ENCODE measurements at regions of chr5 and their contacts with region 1.

Region 1: GRCh38 chr5:172770675-172771438 is at the start of gene DUSP1:
- DNase-seq: no peak
- H3K4me3 ChIP-seq: peak within 1 kb of the TSS; percentile 91 to 99
- H3K27ac ChIP-seq: peak within 1 kb of the TSS; percentile 98
- H3K4me1 ChIP-seq: peaks cover 72% of the 10 kb centered on the region
- H3K27me3 ChIP-seq: no peaks in the 10 kb centered on the region
- CTCF ChIP-seq: peak in 1 of 3 experiments; percentile 35
- POLR2A ChIP-seq: peak in 1 of 2 donors; percentile 100
- total RNA-seq, gene DUSP1: 2,876 TPM

Region 2: GRCh38 chr5:172795318-172795977 is 24.6 kb after region 1 on chr5:
- intact Hi-C with region 1: loop called (anchors 2 kb)
- DNase-seq: peak in 1 of 2 donors; percentile 100
- H3K4me3 ChIP-seq: no peak overlapping the region
- H3K27ac ChIP-seq: peak overlapping the region; percentile 92
- H3K4me1 ChIP-seq: peaks cover 65% of the 10 kb centered on the region
- H3K27me3 ChIP-seq: no peaks in the 10 kb centered on the region
- CTCF ChIP-seq: peak in 1 of 3 experiments; percentile 26
- POLR2A ChIP-seq: no peak

Region 3: GRCh38 chr5:172953776-172954675 is 183.2 kb after region 1 on chr5:
- intact Hi-C with region 1: no loop called
- DNase-seq: no peak
- H3K4me3 ChIP-seq: no peak overlapping the region
- H3K27ac ChIP-seq: no peak overlapping the region
- H3K4me1 ChIP-seq: peaks cover 11% of the 10 kb centered on the region
- H3K27me3 ChIP-seq: no peaks in the 10 kb centered on the region
- CTCF ChIP-seq: no peak
- POLR2A ChIP-seq: no peak

Region 4: DNA sequence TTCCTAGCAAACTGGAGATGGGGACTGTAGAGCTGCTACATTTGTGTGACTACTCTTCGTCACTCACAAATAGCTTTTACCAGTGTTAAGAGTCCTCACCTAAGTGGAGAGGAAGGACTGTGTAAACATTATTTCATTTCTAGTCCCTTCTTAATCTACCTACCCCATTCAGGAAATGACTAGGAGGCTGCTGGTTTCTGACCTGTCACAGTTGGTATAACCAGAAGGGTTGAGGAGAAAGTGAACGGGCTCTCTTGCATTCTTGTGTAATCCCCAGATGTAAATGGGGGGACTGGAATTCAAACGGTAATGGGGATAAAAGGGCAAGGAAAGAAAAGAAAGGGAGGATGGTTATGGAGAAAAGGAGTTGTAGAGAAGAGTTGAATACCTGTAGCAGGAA is 338.1 kb after region 1 on chr5:
- intact Hi-C with region 1: no loop called
- DNase-seq: no peak
- H3K4me3 ChIP-seq: no peak overlapping the region
- H3K27ac ChIP-seq: no peak overlapping the region
- H3K4me1 ChIP-seq: peaks cover 2% of the 10 kb centered on the region
- H3K27me3 ChIP-seq: no peaks in the 10 kb centered on the region
- CTCF ChIP-seq: no peak
- POLR2A ChIP-seq: no peak

Measured in vagina (tissue), 2 donors.